Naive thymus-derived CD8-positive, alpha-beta T cell (primary cell): ENCODE measurements at regions of chr14 and their contacts with region 1.

Region 1: DNA sequence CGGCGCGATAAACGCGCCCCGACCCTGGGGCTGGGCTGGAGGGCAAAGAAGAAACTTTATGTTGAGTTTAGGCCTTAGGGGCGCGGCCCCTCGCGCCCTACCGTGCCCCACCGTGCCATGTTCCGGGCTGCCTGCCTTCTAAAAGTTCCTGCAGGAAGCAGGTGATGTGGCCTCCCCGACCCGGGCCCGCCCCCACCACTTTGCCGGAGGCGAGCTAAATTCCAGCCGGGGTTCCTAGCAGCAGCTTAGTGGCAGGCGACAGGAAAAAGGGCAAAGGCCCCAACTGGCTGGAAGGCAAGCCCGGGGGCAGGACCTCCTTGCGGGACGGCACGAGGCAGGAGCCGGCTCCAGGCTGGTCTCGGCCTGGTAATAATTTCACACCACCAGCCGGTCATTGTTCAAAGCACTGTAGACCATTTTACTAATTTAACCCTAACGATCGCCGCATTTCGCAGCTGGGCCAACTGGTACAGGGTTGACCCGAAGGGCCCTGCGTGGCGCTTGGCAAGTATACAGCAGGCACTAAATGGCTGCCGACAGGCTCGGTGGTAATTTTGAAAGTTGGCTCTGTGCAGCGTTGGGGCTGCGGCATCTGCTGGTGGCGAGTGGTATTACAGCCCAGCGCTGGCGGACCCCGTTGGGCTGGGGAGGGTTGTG is 895 bp upstream of the CCDC88C start:
- DNase-seq: peak in 9 of 10 donors; percentile 65 to 88 (median 79)
- ATAC-seq: peak; percentile 11 to 23
- H3K4me3 Mint-ChIP-seq: peak overlapping the region; percentile 78 to 98 (median 86)
- H3K27ac Mint-ChIP-seq: peak overlapping the region; percentile 84 to 98 (median 93)
- H3K4me1 Mint-ChIP-seq: peaks cover 19 to 56% (median 39%) of the 10 kb centered on the region in 4 donors
- H3K27me3 Mint-ChIP-seq: peaks cover 0 to 2% (median 0%) of the 10 kb centered on the region in 5 donors

Region 2: GRCh38 chr14:91311284-91311662 is 107.2 kb before region 1 on chr14:
- POLR2A ChIA-PET with region 1: interaction called, 408 read pairs
- DNase-seq: peak in 9 of 10 donors; percentile 35 to 79 (median 49)
- ATAC-seq: peak; percentile 47 to 64
- H3K4me3 Mint-ChIP-seq: peak overlapping the region; percentile 13 to 79 (median 70)
- H3K27ac Mint-ChIP-seq: peak overlapping the region; percentile 81 to 96 (median 92)
- H3K4me1 Mint-ChIP-seq: peaks cover 33 to 77% (median 62%) of the 10 kb centered on the region in 4 donors
- H3K27me3 Mint-ChIP-seq: no peaks in the 10 kb centered on the region

Region 3: GRCh38 chr14:91373591-91374254 is 44.8 kb before region 1 on chr14:
- POLR2A ChIA-PET with region 1: interaction called, 184 read pairs
- DNase-seq: peak in 4 of 10 donors; percentile 45 to 57 (median 52)
- ATAC-seq: peak; percentile 33 to 51
- H3K4me3 Mint-ChIP-seq: peak overlapping the region; percentile 76 to 96 (median 85)
- H3K27ac Mint-ChIP-seq: peak overlapping the region; percentile 85 to 98 (median 94)
- H3K4me1 Mint-ChIP-seq: peaks cover 67 to 99% (median 99%) of the 10 kb centered on the region in 4 donors
- H3K27me3 Mint-ChIP-seq: no peaks in the 10 kb centered on the region